Psoas muscle (tissue), 8 donors: ENCODE measurements at regions of chr2 and their contacts with region 1.

Region 1: DNA sequence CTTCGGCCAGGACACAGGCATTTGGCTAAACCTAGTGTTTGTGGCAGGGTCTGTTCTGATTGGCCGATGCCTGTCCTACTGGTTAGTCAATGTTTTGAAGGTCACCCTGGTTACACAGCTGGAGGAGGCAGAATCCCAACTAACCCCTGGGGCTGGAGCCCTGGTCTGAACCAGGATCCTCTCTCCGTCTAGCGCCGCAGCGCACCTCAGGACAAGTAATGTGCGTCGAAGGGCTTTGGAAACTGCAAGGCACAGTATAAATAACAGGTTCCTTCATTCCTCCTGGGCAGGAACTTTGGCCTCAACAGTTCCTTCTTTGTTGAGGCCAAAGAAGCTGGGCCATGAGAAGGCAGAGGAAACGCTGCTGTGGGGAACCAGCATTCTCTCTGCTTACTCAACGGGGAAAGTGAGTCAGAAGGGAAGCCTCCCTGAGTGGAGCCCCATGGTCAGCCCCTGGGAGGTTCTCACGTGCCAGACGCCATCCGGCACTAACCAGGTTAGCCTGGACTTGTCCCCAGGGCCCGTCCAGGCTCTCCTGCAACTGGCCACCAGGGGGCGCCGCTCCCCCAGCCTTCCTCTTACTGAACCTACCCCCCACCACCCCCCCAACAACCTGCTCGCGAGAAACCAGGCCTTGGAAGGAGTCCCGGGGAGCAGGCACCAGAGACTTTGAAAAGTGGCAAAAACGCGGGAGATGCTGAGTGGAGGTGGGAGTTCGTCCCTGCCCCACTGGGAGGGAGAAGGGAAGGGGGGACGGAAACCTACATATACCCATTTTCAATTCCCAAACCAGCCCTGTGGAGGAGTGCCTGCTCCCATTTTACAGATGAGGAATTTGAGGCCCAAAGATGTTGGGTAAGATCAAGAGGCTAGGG is 19.8 kb downstream of the TEX44 start:
- DNase-seq: peak; percentile 94 to 97
- ATAC-seq: peak; percentile 79 to 86 (median 81)
- H3K4me3 ChIP-seq: peak overlapping the region; percentile 73
- H3K27ac ChIP-seq: peak overlapping the region; percentile 78
- H3K4me1 ChIP-seq: peaks cover 31% of the 10 kb centered on the region
- H3K27me3 ChIP-seq: no peaks in the 10 kb centered on the region
- CTCF ChIP-seq: peak; percentile 96

Region 2: GRCh38 chr2:231642631-231643494 is 30.4 kb after region 1 on chr2:
- intact Hi-C with region 1: loop called (anchors 2 to 5 kb)
- DNase-seq: peak; percentile 89 to 95
- ATAC-seq: peak; percentile 94 to 97 (median 96)
- H3K4me3 ChIP-seq: peak overlapping the region; percentile 46
- H3K27ac ChIP-seq: peak overlapping the region; percentile 95
- H3K4me1 ChIP-seq: peaks cover 42% of the 10 kb centered on the region
- H3K27me3 ChIP-seq: no peaks in the 10 kb centered on the region
- CTCF ChIP-seq: no peak

Region 3: GRCh38 chr2:231648587-231649174 is 36.3 kb after region 1 on chr2:
- intact Hi-C with region 1: loop called (anchors 2 to 5 kb)
- DNase-seq: peak; percentile 72 to 87
- ATAC-seq: peak; percentile 94 to 97 (median 95)
- H3K4me3 ChIP-seq: no peak overlapping the region
- H3K27ac ChIP-seq: no peak overlapping the region
- H3K4me1 ChIP-seq: peaks cover 14% of the 10 kb centered on the region
- H3K27me3 ChIP-seq: no peaks in the 10 kb centered on the region
- CTCF ChIP-seq: peak; percentile 81

Region 4: GRCh38 chr2:231662028-231662810 is 49.8 kb after region 1 on chr2:
- intact Hi-C with region 1: loop called in 1 of 2 experiments (anchors 2 kb)
- DNase-seq: peak; percentile 97 to 99
- ATAC-seq: peak; percentile 76 to 79 (median 78)
- H3K4me3 ChIP-seq: peak overlapping the region; percentile 67
- H3K27ac ChIP-seq: peak overlapping the region; percentile 97
- H3K4me1 ChIP-seq: peaks cover 17% of the 10 kb centered on the region
- H3K27me3 ChIP-seq: no peaks in the 10 kb centered on the region
- CTCF ChIP-seq: no peak

Region 5: GRCh38 chr2:231674587-231675338 is 62.3 kb after region 1 on chr2:
- intact Hi-C with region 1: loop called (anchors 1 to 2 kb)
- DNase-seq: peak; percentile 77 to 87
- ATAC-seq: peak; percentile 60 to 81 (median 68)
- H3K4me3 ChIP-seq: no peak overlapping the region
- H3K27ac ChIP-seq: peak overlapping the region; percentile 80
- H3K4me1 ChIP-seq: peaks cover 15% of the 10 kb centered on the region
- H3K27me3 ChIP-seq: no peaks in the 10 kb centered on the region
- CTCF ChIP-seq: peak; percentile 73

Region 6: DNA sequence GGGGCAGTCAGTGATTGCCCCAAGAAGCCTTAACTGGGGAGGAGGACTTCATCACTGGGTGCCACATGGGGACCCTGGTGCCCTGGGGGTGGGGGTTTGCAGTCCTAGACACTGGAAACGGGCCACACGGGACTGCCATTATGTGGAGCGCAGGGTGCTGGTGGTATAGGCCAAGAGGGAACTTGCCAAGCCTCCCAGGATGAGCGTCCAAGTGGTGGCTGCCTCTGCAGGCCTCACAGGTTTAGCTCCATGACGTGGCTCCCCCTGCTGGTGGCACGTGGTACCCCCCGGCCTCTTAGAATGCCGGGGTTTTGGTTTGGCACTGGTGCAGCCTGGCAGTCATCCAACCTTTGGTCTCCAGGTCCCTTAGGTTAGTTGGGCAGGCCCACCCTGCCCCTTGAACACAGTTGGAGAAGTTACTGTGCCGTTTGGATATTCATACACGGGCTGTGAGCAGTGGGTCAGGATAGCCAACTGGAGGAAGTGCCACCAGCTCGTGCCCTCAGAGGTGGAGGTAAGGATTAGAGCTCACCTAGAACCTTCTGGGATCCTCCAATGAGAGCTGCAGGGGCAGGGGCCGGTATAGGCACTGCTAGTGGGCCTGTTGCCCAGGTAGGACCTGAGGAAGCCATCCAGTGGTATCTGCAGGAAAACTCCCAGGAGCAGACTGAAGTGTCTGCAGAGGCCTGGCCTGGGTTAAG is 101.5 kb after region 1 on chr2:
- intact Hi-C with region 1: loop called (anchors 2 to 5 kb)
- DNase-seq: peak; percentile 89 to 95
- ATAC-seq: peak; percentile 50 to 67 (median 60)
- H3K4me3 ChIP-seq: no peak overlapping the region
- H3K27ac ChIP-seq: peak overlapping the region; percentile 48
- H3K4me1 ChIP-seq: peaks cover 39% of the 10 kb centered on the region
- H3K27me3 ChIP-seq: no peaks in the 10 kb centered on the region
- CTCF ChIP-seq: peak; percentile 93

Region 7: GRCh38 chr2:231810905-231811304 is 198.5 kb after region 1 on chr2:
- intact Hi-C with region 1: no loop called
- DNase-seq: no peak
- ATAC-seq: no peak
- H3K4me3 ChIP-seq: no peak overlapping the region
- H3K27ac ChIP-seq: no peak overlapping the region
- H3K4me1 ChIP-seq: no peaks in the 10 kb centered on the region
- H3K27me3 ChIP-seq: no peaks in the 10 kb centered on the region
- CTCF ChIP-seq: no peak